Right cardiac atrium (tissue), 5 donors: ENCODE measurements at regions of chr12 and their contacts with region 1.

Region 1: DNA sequence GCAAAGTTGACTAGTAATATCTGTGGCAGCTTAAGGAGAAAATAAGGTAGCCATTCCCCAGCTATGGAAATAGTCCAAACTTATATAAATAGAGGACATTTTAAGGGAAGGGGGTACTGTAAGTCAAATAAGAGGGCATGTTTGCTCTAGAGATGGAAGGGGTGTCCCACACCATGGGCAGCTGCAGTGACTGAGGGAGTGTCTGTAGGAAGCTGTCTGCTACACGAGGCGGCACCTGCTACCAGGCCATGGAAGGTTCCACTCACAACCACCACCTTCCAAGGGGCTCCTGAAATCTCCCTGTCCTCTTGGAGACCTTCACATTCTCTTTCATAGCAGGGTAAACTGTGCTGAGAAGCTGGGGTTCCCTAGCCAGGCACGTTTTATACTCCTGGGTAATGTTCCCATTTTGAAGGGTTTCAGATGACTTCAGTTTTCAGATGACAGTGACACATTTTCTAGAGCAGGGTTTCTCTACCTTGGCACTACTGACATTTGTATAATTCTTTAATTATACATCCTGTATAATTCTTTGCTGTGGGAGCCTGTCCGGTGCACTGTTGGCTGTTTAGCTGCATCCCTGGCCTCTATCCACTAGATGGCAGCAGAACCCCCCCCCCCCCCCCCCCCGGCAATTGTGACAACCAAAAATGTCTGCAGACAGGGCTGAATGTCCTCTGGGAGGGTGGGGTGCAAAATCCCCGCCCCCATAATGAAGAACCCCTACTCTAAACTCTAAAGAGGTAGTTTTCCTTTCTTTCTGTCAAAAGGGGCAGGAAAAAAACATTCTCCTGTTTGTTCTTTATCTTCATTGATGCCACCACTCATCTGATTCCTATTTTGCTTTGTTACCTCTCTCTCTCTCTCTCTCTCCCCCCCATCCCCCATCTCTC is 11.6 kb upstream of the SMCO2 start:
- DNase-seq: peak in 2 of 3 donors; percentile 36 to 48
- ATAC-seq: peak; percentile 16 to 41
- H3K4me3 ChIP-seq: no peak overlapping the region
- H3K27ac ChIP-seq: no peak overlapping the region
- H3K4me1 ChIP-seq: peaks cover 3% of the 10 kb centered on the region
- H3K27me3 ChIP-seq: no peaks in the 10 kb centered on the region

Region 2: DNA sequence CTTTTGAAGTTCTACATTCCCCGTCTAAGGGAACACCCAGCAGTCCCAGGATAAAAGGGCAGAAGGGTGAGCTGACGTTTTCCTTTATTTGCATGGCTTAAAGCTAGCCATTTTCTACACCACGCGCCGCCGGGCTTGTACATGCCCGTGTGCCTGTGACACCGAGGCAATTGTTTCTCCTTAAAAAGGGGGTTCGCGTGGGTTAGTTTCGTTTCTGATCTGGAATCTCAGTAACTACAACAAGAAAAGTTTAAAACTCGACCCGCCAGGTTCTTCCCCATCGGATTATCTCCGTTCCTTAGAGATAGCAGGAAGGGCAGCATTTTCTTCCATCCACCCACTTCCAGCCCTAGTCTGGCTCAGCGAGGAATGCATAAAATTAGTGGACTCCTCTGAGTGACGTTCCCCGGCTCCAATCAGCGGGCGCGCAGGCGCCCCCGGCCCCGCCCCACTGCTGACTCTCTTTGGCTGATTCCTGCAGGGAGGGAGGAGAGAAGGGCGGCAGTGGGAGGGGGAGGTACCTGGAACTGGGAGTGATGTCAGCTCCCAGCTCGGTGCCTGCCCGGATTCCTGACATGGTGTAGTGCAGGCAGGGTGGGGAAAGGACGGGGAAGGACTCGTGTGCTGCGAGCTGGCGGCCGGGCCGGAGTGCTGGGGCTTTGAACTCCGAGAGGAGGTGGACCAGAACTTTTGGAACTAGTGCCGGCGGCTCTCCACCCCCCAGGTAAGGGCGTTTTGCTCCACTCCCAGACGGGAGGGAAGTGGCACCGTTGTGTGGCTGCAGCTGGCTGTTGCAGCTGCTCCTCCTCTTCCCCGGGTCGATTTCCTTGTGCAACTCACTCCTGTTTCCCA is 88.9 kb after region 1 on chr12 and contains the start of gene PPFIBP1:
- intact Hi-C with region 1: loop called in 3 of 4 experiments (anchors 10 kb)
- DNase-seq: peak; percentile 98 to 100 (median 99)
- ATAC-seq: peak; percentile 99
- H3K4me3 ChIP-seq: peak within 1 kb of the TSS; percentile 84
- H3K27ac ChIP-seq: peak within 1 kb of the TSS; percentile 94
- H3K4me1 ChIP-seq: peaks cover 4% of the 10 kb centered on the region
- H3K27me3 ChIP-seq: no peaks in the 10 kb centered on the region
- total RNA-seq, gene PPFIBP1: 72.4 to 176 (median 94.8) TPM

Region 3: DNA sequence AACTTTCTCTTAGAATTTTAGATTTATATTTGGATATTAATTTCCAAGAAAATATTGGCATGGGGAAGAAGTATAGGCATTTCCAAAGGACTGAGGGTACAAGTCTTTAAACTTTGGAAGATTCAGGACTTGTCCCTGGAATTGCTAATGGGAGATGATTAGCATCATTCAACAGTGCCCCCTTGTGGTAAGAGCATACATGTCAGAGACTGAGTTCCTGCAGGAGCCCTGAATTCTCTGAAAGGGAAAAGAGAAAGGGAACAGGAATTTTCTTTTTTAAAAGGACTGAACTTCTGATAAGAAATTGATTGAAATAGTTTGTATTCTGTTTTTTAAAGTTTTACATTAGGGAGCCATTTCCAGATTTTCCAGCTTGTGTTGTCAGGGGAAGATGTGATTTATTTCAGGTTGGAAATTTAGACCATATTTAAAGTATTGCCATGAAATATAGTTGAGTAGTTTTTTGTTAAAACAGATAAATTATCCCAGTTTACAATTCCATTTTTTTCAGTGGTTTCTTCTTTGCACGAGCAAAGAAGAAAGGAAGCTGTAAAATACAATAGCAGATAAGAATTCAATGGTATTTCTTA is 217.3 kb after region 1 on chr12:
- intact Hi-C with region 1: loop called in 3 of 4 experiments (anchors 5 to 10 kb)
- DNase-seq: no peak
- ATAC-seq: peak; percentile 71 to 86
- H3K4me3 ChIP-seq: no peak overlapping the region
- H3K27ac ChIP-seq: no peak overlapping the region
- H3K4me1 ChIP-seq: no peaks in the 10 kb centered on the region
- H3K27me3 ChIP-seq: no peaks in the 10 kb centered on the region